ENCODE measurements at regions of chr7 and their contacts with region 1.

Region 1: DNA sequence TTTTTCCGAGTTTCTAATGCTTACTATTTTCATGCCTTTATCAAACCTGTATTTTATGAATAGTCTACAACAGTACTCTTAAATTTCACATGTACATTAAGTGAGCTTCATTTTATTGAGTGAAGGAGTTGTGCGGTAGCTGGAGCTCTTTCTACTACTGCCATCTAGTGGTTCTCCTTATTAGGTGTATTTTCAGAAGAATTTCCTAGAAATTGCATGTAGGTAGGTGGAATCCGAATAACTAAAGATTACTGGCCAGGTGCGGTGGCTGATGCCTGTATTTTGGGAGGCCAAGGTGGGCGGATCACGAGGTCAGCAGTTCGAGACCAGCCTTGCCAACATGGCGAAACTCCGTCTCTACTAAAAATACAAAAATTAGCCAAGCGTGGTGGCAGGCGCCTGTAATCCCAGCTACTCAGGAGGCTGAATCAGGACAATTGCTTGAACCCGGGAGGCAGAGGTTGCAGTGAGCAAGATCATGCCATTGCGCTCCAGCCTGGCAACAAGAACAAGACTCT is 38.3 kb downstream of the LRRC72 start:
- DNase-seq: peak; percentile 15
- H3K4me3 ChIP-seq: no peak overlapping the region
- H3K27ac ChIP-seq: no peak overlapping the region
- H3K27me3 ChIP-seq: no peaks in the 10 kb centered on the region
- CTCF ChIP-seq: peak; percentile 79

Region 2: DNA sequence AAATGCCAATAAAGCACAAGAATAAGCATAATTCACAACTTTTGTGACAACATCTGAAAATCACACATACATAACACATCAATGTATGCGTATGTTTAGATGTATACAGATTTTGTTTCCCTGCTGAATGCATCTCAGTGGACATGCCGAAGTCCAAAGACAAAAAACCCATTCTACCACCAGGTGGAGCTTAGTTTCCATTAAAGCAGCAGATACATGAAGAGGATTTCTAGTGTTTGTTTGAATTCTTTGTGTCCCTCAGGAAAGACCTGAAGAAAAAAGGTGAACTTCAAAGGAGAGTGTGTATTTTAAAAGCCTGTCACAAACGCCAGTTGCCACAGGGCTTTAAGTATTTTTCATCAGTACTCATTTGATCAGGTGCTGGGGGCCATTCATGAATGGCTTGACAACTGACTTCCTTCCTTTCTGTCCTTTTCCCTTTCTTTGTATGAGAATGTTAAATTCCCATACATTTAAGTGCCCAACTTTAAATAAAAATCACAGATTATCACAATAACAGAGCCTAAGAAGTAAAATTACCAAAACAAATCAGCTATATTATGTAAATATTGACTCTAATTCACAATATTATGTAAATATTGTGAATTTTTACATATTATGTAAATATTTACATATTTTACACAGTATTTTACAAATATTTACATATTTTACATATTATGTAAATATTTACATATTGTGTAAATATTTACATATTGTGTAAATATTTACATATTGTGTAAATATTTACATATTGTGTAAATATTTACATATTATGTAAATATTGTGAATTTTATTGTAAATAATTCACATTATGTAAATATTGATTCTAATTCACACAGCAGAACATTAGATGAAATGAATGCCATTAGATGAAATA is 486.7 kb before region 1 on chr7:
- CTCF ChIA-PET with region 1: interaction called, 153 read pairs
- POLR2A ChIA-PET with region 1: no interaction called
- DNase-seq: peak; percentile 23
- H3K4me3 ChIP-seq: no peak overlapping the region
- H3K27ac ChIP-seq: no peak overlapping the region
- H3K27me3 ChIP-seq: no peaks in the 10 kb centered on the region
- CTCF ChIP-seq: peak; percentile 79

Region 3: DNA sequence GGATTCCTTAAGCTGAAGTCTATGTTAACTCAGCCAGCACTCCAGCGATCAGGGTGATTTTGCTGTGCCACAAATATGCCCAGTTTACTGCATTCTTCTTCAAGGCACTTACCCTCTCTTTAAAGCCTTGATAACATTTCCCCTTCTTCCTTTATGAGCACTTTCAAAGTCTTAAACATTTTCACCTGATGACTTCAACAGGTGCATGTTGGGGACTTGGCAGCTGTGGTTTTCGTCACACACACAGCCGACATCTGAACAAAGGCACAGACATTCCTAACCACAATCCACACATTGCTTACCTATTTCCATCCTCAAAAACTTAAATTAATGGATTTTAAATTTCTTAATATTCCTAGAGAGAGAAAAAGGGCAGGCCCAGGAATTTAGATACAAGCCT is 475.2 kb before region 1 on chr7:
- CTCF ChIA-PET with region 1: interaction called, 17 read pairs
- POLR2A ChIA-PET with region 1: no interaction called
- DNase-seq: no peak
- H3K4me3 ChIP-seq: no peak overlapping the region
- H3K27ac ChIP-seq: no peak overlapping the region
- H3K27me3 ChIP-seq: no peaks in the 10 kb centered on the region
- CTCF ChIP-seq: no peak

Region 4: GRCh38 chr7:16114633-16115032 is 450.3 kb before region 1 on chr7:
- CTCF ChIA-PET with region 1: interaction called, 57 read pairs
- POLR2A ChIA-PET with region 1: no interaction called
- DNase-seq: peak; percentile 16
- H3K4me3 ChIP-seq: no peak overlapping the region
- H3K27ac ChIP-seq: no peak overlapping the region
- H3K27me3 ChIP-seq: no peaks in the 10 kb centered on the region
- CTCF ChIP-seq: peak; percentile 49

Region 5: GRCh38 chr7:16431646-16432424 is 133.1 kb before region 1 on chr7:
- CTCF ChIA-PET with region 1: interaction called, 127 read pairs
- POLR2A ChIA-PET with region 1: no interaction called
- DNase-seq: no peak
- H3K4me3 ChIP-seq: no peak overlapping the region
- H3K27ac ChIP-seq: no peak overlapping the region
- H3K27me3 ChIP-seq: no peaks in the 10 kb centered on the region
- CTCF ChIP-seq: peak; percentile 48

Region 6: DNA sequence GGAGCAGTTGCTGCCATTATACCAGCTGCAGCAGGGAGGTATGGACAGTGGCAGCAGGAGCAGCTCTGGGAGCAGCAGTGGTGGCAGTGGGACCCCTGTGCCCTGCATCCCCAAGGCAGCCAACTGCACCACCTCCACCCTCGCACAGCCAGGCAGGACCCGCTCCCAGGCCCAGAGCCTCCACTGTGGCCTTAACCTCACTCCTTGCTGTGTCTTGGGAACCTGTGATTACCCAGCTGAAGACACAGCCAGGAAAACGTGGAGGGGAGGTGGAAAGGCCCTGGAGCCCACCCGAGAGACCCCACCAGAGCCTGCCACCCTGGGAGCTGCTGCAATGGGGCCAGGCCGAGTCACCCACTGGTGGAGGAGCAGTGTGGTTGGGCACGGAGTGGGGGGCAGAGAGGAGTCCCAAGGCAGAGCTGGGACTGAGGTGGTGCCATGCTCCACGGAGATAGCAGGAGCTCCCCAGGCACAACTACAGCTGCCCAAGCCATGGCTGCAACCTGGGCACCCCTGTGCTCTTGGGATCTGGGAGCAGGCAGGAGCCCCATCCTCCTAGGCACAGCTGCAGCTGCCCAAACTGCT is 18.0 kb before region 1 on chr7:
- CTCF ChIA-PET with region 1: interaction called, 44 read pairs
- POLR2A ChIA-PET with region 1: no interaction called
- DNase-seq: no peak
- H3K4me3 ChIP-seq: no peak overlapping the region
- H3K27ac ChIP-seq: no peak overlapping the region
- H3K27me3 ChIP-seq: peaks cover 2% of the 10 kb centered on the region
- CTCF ChIP-seq: no peak

Region 7: GRCh38 chr7:16579216-16579615 is 14.2 kb after region 1 on chr7:
- CTCF ChIA-PET with region 1: interaction called, 11 read pairs
- POLR2A ChIA-PET with region 1: no interaction called
- DNase-seq: no peak
- H3K4me3 ChIP-seq: no peak overlapping the region
- H3K27ac ChIP-seq: no peak overlapping the region
- H3K27me3 ChIP-seq: no peaks in the 10 kb centered on the region
- CTCF ChIP-seq: no peak

Region 8: DNA sequence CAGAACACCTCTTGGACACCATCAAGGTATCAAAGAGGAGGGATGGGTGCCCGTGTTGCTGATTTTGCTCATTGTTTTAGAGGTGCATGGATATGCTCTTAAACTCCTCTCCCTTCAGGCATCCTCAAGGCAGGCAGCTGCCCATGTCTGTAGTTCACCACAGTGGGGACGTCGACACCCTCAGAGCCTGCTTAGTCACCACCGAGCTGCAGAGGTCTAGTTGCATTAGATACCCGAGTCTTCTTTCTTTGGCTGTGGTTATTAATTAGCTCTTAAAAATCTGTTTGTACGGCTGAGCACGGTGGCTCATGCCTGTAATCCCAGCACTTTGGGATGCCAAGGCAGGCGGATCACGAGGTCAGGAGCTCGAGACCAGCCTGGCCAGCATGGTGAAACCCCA is 163.8 kb after region 1 on chr7:
- CTCF ChIA-PET with region 1: no interaction called
- POLR2A ChIA-PET with region 1: no interaction called
- DNase-seq: no peak
- H3K4me3 ChIP-seq: no peak overlapping the region
- H3K27ac ChIP-seq: no peak overlapping the region
- H3K27me3 ChIP-seq: no peaks in the 10 kb centered on the region
- CTCF ChIP-seq: no peak

Measured in AG04450 (cell line).